ENCODE measurements at regions of chr19 and their contacts with region 1.

Region 1: DNA sequence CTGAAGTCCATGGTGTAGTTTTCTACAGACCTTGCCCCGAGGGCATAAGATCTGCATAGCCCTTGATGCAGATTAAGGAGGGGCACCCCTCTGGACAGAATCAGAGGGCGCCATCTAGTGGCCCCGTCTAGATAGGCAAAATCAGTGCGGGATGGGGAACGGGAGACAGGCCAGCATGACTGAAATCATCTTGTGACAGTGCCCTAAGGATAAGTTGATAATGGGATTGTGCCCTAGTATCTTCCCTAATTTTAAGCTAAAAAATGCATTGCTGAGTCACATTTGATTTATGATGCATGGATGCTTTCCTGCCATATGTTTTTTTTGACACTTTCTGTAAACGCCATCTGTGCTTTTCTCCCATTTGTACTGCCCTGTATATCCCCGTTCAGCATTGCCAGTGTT is 19.0 kb upstream of the GPI start:
- DNase-seq: peak; percentile 60
- H3K4me3 ChIP-seq: no peak overlapping the region
- H3K27ac ChIP-seq: no peak overlapping the region
- H3K4me1 ChIP-seq: no peaks in the 10 kb centered on the region
- H3K27me3 ChIP-seq: no peaks in the 10 kb centered on the region
- CTCF ChIP-seq: peak; percentile 82 to 83

Region 2: DNA sequence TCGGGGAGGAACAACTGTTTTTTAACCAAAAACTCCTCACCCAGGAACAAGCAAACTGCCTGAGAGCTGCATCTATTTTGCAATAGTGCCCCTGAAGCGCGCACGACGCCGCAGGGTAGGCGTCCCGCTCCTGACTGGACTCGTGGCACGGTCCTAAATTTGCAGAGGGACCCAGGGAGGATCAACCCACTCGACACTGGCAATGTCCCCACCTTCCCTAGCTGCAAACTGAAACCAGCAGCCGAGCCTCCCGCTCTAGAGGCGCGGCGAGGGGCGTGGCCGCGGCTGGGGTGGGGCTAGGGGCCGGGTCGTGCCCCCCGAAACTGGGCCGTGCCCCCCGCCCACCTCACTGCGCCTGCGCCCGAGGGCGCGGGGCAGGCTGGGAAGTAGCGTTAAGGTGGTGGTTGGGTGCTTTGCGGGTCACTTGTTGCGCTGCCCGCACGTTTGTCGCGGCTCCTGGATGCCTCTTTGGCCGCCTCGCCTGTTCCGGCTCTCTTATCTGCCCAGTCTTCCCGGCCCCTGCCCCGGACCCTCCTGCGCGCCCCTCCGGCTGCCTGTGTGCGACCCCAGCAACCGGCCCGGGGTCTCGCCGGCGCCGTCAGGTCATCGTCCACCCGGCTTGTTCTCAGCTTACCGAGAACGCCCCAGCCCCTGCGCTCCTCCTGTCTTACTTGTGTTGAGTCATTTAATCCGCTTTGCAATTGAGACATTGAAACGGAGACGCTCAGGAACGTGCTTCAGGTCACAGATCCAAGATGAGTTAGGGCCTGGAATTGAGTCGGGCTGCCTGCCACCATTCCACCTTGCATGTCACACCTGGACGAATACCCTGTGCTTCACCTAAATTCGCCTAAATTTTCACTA is 211.5 kb before region 1 on chr19:
- CTCF ChIA-PET with region 1: no interaction called
- dilution Hi-C with region 1: no loop called
- in situ Hi-C with region 1: no loop called
- intact Hi-C with region 1: no loop called
- DNase-seq: peak; percentile 59
- H3K4me3 ChIP-seq: peak overlapping the region; percentile 59 to 66 (median 62)
- H3K27ac ChIP-seq: peak overlapping the region; percentile 26
- H3K4me1 ChIP-seq: no peaks in the 10 kb centered on the region
- H3K27me3 ChIP-seq: no peaks in the 10 kb centered on the region
- CTCF ChIP-seq: no peak

Region 3: DNA sequence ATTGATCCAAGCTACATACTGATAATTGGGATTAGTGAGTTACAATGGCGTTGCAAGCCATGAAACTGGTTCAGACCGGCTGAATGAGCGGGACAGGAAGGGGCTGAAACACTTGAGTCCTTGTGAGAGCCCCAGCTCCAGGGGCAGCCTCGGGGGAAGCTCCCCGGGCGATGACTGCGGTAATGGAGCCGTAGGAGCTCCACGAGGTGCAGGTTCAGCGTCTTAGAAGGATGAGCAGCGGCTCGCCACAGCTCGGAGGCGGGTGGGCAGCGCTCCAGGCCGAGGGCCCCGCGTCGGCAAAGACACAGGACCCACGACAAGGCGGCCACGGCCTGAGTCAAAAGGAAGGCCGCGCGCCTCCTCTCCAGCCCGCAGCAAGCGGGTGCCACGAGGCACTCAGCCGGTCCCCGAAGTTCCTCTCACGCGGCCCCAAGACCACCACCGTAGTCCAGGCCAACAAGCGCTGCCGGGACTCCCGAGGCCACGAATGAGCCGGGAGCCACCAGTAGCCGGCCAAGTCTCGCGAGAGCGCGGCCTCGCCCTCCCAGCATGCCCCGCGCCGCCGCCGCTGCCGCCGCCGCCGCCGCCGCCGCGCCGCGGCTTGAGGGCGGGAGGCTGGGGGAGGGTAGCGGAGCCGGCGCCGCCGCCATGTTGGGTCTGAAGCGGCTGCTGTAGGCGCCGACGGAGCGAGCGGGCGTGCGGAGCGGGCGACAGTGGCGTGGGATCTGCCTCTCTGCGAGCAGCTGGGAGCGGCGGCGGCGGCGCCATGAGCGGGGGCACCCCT is 173.9 kb before region 1 on chr19 and contains the start of gene LSM14A:
- CTCF ChIA-PET with region 1: no interaction called
- dilution Hi-C with region 1: no loop called
- in situ Hi-C with region 1: no loop called
- intact Hi-C with region 1: loop called (anchors 1 kb)
- DNase-seq: peak; percentile 79
- H3K4me3 ChIP-seq: peak within 1 kb of the TSS; percentile 93 to 96 (median 95)
- H3K27ac ChIP-seq: peak within 1 kb of the TSS; percentile 89
- H3K4me1 ChIP-seq: peaks cover 13% of the 10 kb centered on the region
- H3K27me3 ChIP-seq: no peaks in the 10 kb centered on the region
- CTCF ChIP-seq: no peak
- total RNA-seq, gene LSM14A: 57.3 to 83.4 TPM

Region 4: GRCh38 chr19:34244611-34245299 is 101.2 kb before region 1 on chr19:
- CTCF ChIA-PET with region 1: no interaction called
- dilution Hi-C with region 1: no loop called
- in situ Hi-C with region 1: no loop called
- intact Hi-C with region 1: loop called (anchors 5 kb)
- DNase-seq: no peak
- H3K4me3 ChIP-seq: no peak overlapping the region
- H3K27ac ChIP-seq: no peak overlapping the region
- H3K4me1 ChIP-seq: no peaks in the 10 kb centered on the region
- H3K27me3 ChIP-seq: no peaks in the 10 kb centered on the region
- CTCF ChIP-seq: no peak

Region 5: GRCh38 chr19:34282611-34283519 is 63.1 kb before region 1 on chr19:
- CTCF ChIA-PET with region 1: no interaction called
- dilution Hi-C with region 1: no loop called
- in situ Hi-C with region 1: no loop called
- intact Hi-C with region 1: no loop called
- DNase-seq: peak; percentile 49
- H3K4me3 ChIP-seq: no peak overlapping the region
- H3K27ac ChIP-seq: no peak overlapping the region
- H3K4me1 ChIP-seq: no peaks in the 10 kb centered on the region
- H3K27me3 ChIP-seq: no peaks in the 10 kb centered on the region
- CTCF ChIP-seq: no peak